Gastrocnemius medialis (tissue), 4 donors: ENCODE measurements at regions of chr6 and their contacts with region 1.

Region 1: DNA sequence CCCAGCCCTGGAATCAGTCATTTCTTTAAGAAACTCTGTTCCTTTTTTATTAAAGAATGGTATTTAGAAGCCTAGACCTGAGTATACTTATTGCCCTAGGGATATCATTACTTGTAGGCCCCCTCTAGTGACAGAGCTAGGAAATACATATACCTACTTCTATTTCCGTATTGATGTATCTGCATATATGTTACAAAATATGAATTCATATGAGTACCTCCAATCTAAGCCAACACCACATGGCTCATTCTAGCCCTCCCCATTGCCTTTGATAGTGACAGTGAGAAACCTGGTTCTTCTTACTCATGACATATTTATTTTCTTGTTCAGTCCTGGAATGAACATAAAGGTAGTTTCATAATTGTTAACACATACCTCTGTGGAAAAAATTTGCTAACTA is 137.2 kb downstream of the FARS2 start:
- DNase-seq: no peak
- ATAC-seq: peak in 1 of 2 donors; percentile 30
- H3K4me3 ChIP-seq: no peak overlapping the region
- H3K27ac ChIP-seq: no peak overlapping the region
- H3K4me1 ChIP-seq: no peaks in the 10 kb centered on the region
- H3K27me3 ChIP-seq: no peaks in the 10 kb centered on the region
- CTCF ChIP-seq: peak in 4 of 5 experiments; percentile 26 to 48 (median 38)
- POLR2A ChIP-seq: no peak

Region 2: DNA sequence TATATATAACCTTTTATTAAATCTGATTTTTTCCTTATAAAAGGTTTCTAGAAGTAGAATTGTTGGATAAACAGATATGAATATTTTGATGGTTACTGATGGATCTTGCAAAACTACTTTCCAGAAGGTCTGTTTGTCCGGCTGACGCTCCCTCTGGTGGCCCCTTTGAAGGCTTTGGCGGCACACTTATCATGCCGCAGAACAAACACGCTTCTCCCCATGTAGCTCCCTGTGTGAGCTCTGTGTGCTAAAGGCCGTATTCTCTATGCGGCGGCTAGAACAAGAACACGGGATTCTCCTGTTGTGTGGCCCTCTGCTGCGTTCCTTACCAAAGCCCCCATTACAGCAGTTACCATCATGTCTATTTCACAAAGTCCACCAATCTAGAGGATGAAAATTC is 283.4 kb before region 1 on chr6:
- in situ Hi-C with region 1: no loop called
- intact Hi-C with region 1: no loop called
- DNase-seq: no peak
- ATAC-seq: no peak
- H3K4me3 ChIP-seq: no peak overlapping the region
- H3K27ac ChIP-seq: no peak overlapping the region
- H3K4me1 ChIP-seq: no peaks in the 10 kb centered on the region
- H3K27me3 ChIP-seq: no peaks in the 10 kb centered on the region
- CTCF ChIP-seq: peak in 1 of 5 experiments; percentile 18
- POLR2A ChIP-seq: no peak

Region 3: DNA sequence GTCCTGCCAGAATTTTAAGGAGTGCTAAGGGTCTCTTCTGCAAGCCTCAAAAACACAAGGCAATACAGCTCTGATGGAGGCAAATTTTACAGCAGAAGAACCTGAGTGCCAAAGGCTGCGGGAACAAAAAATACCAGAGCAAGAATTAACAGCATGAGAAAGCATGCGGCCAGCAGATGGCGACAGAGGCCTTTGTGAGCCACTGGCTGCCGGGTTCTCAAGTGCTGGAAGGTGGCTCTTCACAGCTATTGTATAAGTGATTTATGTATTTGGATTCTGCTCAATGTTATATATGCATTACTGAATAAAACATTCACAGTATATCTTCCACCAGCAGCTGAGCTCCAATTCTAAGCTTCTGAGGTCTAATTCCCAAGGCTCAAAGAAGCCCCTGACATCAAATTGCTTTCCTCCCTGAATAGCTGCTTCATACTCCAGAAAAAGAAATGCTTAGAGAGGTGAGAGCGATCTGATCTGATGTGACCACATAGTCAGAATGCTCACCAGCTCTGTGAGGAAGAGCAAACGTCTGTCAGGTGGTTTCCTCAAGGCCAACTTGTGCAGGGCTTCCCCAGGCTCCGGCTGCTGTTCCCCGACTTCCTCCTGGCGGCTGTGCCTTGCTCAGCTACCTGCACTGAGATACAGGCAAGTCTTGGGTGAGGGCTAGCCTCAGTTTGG is 254.8 kb before region 1 on chr6:
- in situ Hi-C with region 1: loop called (anchors 10 to 25 kb)
- intact Hi-C with region 1: loop called (anchors 1 kb)
- DNase-seq: peak; percentile 59 to 72
- ATAC-seq: peak; percentile 82 to 90
- H3K4me3 ChIP-seq: no peak overlapping the region
- H3K27ac ChIP-seq: no peak overlapping the region
- H3K4me1 ChIP-seq: peaks cover 4 to 10% of the 10 kb centered on the region in 2 donors
- H3K27me3 ChIP-seq: no peaks in the 10 kb centered on the region
- CTCF ChIP-seq: peak; percentile 81 to 96 (median 87)
- POLR2A ChIP-seq: no peak

Region 4: GRCh38 chr6:5214570-5215052 is 183.9 kb before region 1 on chr6:
- in situ Hi-C with region 1: no loop called
- intact Hi-C with region 1: loop called (anchors 5 kb)
- DNase-seq: no peak
- ATAC-seq: no peak
- H3K4me3 ChIP-seq: no peak overlapping the region
- H3K27ac ChIP-seq: no peak overlapping the region
- H3K4me1 ChIP-seq: no peaks in the 10 kb centered on the region
- H3K27me3 ChIP-seq: no peaks in the 10 kb centered on the region
- CTCF ChIP-seq: peak; percentile 10 to 58 (median 19)
- POLR2A ChIP-seq: no peak

Region 5: GRCh38 chr6:5260661-5261544 is 137.6 kb before region 1 on chr6 and contains the starts of genes FARS2 and LYRM4:
- in situ Hi-C with region 1: no loop called
- intact Hi-C with region 1: loop called (anchors 5 kb)
- DNase-seq: peak; percentile 64 to 81
- ATAC-seq: peak; percentile 93 to 94
- H3K4me3 ChIP-seq: peak within 1 kb of the TSS; percentile 58 to 97 (median 86)
- H3K27ac ChIP-seq: peak within 1 kb of the TSS; percentile 85 to 99 (median 94)
- H3K4me1 ChIP-seq: peaks cover 15 to 24% of the 10 kb centered on the region in 2 donors
- H3K27me3 ChIP-seq: no peaks in the 10 kb centered on the region
- CTCF ChIP-seq: peak in 2 of 5 experiments; percentile 36 to 45
- POLR2A ChIP-seq: peak; percentile 60 to 68
- total RNA-seq, gene FARS2: 13.6 to 24.0 (median 15.8) TPM
- total RNA-seq, gene LYRM4: 8.4 to 20.1 (median 12.2) TPM

Region 6: DNA sequence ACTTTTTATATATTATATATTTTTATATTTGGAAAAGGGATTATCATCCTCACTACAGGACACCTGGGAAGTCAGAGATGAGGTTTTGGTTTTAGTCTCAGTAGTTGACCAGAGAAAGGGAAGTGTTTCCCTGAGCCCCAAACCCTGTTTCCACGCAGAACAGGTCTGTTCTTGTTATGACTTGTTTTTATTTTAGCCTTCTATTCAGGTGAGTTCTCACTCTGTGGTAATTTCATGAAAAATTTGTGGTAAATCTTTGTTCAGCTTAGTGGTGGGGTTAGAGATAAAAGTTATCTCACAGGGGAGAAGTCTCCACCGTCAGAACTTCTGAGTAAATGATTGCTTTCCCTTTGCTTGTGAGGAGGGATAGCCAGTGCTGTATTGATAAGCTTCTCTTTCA is 87.7 kb after region 1 on chr6:
- in situ Hi-C with region 1: no loop called
- intact Hi-C with region 1: no loop called
- DNase-seq: no peak
- ATAC-seq: no peak
- H3K4me3 ChIP-seq: no peak overlapping the region
- H3K27ac ChIP-seq: no peak overlapping the region
- H3K4me1 ChIP-seq: peaks cover under 1 to 4% of the 10 kb centered on the region in 2 donors
- H3K27me3 ChIP-seq: no peaks in the 10 kb centered on the region
- CTCF ChIP-seq: no peak
- POLR2A ChIP-seq: no peak